ENCODE measurements at regions of chr1 and their contacts with region 1.

Region 1: DNA sequence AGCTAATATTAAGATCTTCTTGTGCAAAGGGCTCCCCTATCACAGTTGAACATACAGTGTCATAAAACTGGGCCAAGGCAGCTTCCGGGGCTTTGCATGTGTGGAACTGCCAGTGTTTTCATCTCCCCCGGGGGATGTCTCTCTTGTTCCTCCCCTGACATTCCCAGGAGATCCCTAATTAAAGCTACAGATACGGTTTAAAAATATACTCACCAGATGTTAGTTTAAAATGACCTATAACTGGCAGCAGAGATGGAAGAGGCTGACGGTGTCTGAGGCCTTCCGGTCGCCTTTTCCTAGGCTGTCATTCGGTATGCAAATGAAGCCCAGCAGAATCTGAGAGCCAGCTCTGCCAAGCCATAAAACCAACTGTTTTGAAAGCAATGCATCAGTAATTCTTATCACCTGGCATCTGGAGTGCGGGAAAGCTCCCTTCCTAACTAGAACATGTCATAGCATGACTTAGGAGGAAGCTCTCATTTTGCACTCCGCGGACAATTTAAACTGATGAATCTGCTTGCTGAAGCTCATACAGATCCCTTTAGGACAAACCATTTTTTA is 436.5 kb upstream of the VAMP3 start:
- DNase-seq: no peak
- ATAC-seq: no peak
- H3K4me3 ChIP-seq: no peak overlapping the region
- H3K27ac ChIP-seq: no peak overlapping the region
- H3K4me1 ChIP-seq: no peaks in the 10 kb centered on the region
- H3K27me3 ChIP-seq: peaks cover 22 to 62% of the 10 kb centered on the region in 2 experiments
- CTCF ChIP-seq: no peak
- EP300 ChIP-seq: no peak
- POLR2A ChIP-seq: no peak
- RAD21 ChIP-seq: no peak

Region 2: GRCh38 chr1:7302873-7303272 is 31.7 kb before region 1 on chr1:
- CTCF ChIA-PET with region 1: no interaction called
- POLR2A ChIA-PET with region 1: no interaction called
- in situ Hi-C with region 1: no loop called
- intact Hi-C with region 1: no loop called
- DNase-seq: no peak
- ATAC-seq: peak; percentile 67
- H3K4me3 ChIP-seq: no peak overlapping the region
- H3K27ac ChIP-seq: no peak overlapping the region
- H3K4me1 ChIP-seq: no peaks in the 10 kb centered on the region
- H3K27me3 ChIP-seq: peaks cover 4 to 6% of the 10 kb centered on the region in 2 experiments; a peak in 2 of 5 replicates
- CTCF ChIP-seq: no peak
- EP300 ChIP-seq: no peak
- POLR2A ChIP-seq: no peak
- RAD21 ChIP-seq: no peak

Region 3: DNA sequence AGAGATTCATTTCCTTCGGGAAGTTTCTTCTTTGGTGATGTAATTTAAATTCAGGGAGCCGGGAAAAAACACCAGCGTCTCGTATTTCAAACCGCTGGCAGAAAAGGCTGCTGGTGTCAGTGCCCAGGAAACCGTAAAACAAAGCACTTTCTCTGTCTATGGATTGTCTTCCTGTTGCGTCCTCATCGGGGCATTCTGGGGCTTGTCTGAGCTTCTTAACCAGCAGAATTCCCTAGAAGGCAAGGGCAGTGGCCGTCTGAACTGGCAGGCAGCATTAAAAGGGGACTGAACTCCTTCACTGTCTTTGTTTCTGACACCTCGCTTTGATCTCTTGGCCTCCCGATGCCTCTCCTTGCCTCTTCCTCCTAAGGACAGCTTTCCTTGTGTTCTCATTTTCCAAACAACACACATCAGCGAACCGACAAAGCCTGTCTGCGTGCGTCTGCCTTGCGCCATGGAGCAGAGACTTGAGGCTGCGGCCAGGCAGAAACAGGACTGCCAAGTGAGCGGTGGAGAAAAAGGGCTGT is 45.0 kb after region 1 on chr1:
- CTCF ChIA-PET with region 1: no interaction called
- POLR2A ChIA-PET with region 1: no interaction called
- in situ Hi-C with region 1: loop called (anchors 5 kb)
- intact Hi-C with region 1: no loop called
- DNase-seq: no peak
- ATAC-seq: no peak
- H3K4me3 ChIP-seq: no peak overlapping the region
- H3K27ac ChIP-seq: no peak overlapping the region
- H3K4me1 ChIP-seq: no peaks in the 10 kb centered on the region
- H3K27me3 ChIP-seq: peaks cover 19 to 52% of the 10 kb centered on the region in 2 experiments; a peak in 4 of 5 replicates
- CTCF ChIP-seq: no peak
- EP300 ChIP-seq: no peak
- POLR2A ChIP-seq: no peak
- RAD21 ChIP-seq: no peak

Region 4: GRCh38 chr1:7616076-7616832 is 281.7 kb after region 1 on chr1:
- CTCF ChIA-PET with region 1: no interaction called
- POLR2A ChIA-PET with region 1: no interaction called
- in situ Hi-C with region 1: no loop called
- intact Hi-C with region 1: no loop called
- DNase-seq: peak; percentile 56 to 75 (median 71)
- ATAC-seq: peak; percentile 82
- H3K4me3 ChIP-seq: no peak overlapping the region
- H3K27ac ChIP-seq: no peak overlapping the region
- H3K4me1 ChIP-seq: no peaks in the 10 kb centered on the region
- H3K27me3 ChIP-seq: peaks cover 0 to 16% of the 10 kb centered on the region in 2 experiments; a peak in 2 of 5 replicates
- CTCF ChIP-seq: no peak
- EP300 ChIP-seq: no peak
- POLR2A ChIP-seq: no peak
- RAD21 ChIP-seq: no peak